A549 (cell line): ENCODE measurements at regions of chr10 and their contacts with region 1.

Region 1: DNA sequence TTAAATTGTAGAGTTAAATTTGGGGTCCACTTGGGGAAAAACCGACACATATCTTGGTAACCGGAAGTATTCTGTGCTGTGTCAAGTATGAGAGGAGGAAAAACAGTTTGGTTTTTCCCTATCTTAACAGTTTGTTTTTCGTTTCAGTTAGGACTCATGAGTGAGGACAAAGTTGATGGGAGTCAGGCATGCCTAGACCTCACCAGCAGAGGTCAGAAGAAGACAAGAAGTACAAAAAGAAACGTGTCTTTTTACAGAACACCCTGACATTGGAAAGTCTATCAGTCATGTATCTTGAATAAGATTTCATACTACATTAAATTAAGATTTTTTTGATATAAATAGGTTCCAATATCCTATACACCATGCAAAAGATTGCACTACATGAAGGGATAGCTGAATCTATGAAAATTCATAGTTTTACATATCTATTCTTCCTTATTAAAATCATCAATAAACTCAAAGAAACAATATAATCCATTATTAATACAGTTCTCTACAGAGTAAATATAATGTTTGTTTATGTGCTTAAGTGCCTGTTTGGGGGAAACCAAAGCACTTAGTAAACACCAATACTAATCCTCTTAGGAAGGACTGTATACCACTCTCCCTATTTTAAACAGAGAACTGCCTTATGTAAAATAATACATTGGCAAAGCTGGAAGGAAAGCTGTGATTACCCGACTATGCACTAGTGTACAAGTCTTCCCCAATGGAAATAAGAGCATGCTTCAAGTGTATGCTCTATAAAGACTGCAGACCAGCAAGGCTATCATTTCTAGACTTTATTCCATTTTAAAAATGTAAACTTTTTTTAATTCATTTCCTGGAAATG is 95.6 kb downstream of the USP6NL start:
- DNase-seq: peak; percentile 28 to 69
- ATAC-seq: peak; percentile 88 to 91
- H3K4me3 ChIP-seq: no peak overlapping the region
- H3K27ac ChIP-seq: no peak overlapping the region
- H3K4me1 ChIP-seq: no peaks in the 10 kb centered on the region
- CTCF ChIP-seq: peak; percentile 90
- EP300 ChIP-seq: no peak
- POLR2A ChIP-seq: no peak
- RAD21 ChIP-seq: peak; percentile 95 to 97

Region 2: DNA sequence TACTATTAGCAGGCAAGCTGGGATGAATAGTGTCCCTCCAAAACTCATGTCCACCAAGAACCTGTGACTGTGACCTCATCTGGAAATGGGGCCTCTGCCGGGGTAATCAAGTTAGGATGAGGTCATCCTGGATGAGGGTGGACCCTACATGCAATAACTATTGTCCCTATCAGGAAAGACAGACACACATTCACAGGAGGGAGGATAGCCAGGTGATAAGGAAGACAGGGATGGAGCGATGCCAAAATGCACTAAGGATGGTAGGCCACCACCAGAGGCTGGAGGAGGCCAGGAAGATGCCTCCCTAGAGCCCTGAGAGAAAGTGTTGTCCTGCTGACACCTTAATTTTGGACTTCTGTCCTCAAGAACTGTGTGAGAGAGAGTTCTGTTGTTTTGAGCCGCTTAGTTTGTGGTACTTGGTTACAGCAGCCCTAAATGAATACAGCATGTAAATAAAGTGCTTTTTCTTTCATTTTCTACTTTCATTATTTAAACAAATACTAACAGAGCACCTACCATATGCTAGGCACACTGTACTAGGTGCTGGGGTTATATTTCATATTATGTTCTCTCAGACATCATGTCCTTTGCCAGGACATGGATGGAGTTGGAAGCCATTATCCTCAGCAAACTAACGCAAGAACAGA is 16.3 kb before region 1 on chr10:
- CTCF ChIA-PET with region 1: interaction called, 19 read pairs
- POLR2A ChIA-PET with region 1: no interaction called
- DNase-seq: no peak
- ATAC-seq: no peak
- H3K4me3 ChIP-seq: no peak overlapping the region
- H3K27ac ChIP-seq: no peak overlapping the region
- H3K4me1 ChIP-seq: no peaks in the 10 kb centered on the region
- CTCF ChIP-seq: no peak
- EP300 ChIP-seq: no peak
- POLR2A ChIP-seq: no peak
- RAD21 ChIP-seq: no peak

Region 3: DNA sequence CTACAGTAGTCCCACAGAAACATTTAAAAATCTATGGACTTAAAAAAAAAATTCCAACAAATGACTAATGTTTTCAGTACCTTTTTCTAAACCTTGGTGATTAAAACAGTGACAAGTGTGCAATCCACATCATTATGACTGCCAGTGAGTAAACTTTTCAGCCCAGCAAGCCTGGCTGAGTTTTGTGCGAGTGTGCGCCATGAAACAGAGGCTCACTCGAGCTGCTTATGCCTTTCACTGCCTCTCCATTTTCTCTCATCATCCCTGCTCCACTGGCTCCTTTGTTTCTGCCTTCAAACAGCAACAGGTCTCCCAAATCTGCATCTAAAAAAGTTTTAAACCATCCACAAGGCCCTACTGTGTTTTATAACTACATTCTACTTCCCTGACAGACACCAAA is 10.2 kb before region 1 on chr10:
- CTCF ChIA-PET with region 1: interaction called, 19 read pairs
- POLR2A ChIA-PET with region 1: no interaction called
- DNase-seq: no peak
- ATAC-seq: no peak
- H3K4me3 ChIP-seq: no peak overlapping the region
- H3K27ac ChIP-seq: no peak overlapping the region
- H3K4me1 ChIP-seq: no peaks in the 10 kb centered on the region
- CTCF ChIP-seq: no peak
- EP300 ChIP-seq: no peak
- POLR2A ChIP-seq: no peak
- RAD21 ChIP-seq: no peak

Region 4: GRCh38 chr10:11715815-11716494 is 200.1 kb after region 1 on chr10:
- CTCF ChIA-PET with region 1: interaction called, 128 read pairs
- POLR2A ChIA-PET with region 1: no interaction called
- DNase-seq: no peak
- ATAC-seq: peak; percentile 49 to 65; a peak in 3 of 6 replicates
- H3K4me3 ChIP-seq: no peak overlapping the region
- H3K27ac ChIP-seq: no peak overlapping the region
- H3K4me1 ChIP-seq: peaks cover 9% of the 10 kb centered on the region; the same call in 1 of the 3 replicates
- CTCF ChIP-seq: no peak
- EP300 ChIP-seq: no peak
- POLR2A ChIP-seq: no peak
- RAD21 ChIP-seq: no peak

Region 5: DNA sequence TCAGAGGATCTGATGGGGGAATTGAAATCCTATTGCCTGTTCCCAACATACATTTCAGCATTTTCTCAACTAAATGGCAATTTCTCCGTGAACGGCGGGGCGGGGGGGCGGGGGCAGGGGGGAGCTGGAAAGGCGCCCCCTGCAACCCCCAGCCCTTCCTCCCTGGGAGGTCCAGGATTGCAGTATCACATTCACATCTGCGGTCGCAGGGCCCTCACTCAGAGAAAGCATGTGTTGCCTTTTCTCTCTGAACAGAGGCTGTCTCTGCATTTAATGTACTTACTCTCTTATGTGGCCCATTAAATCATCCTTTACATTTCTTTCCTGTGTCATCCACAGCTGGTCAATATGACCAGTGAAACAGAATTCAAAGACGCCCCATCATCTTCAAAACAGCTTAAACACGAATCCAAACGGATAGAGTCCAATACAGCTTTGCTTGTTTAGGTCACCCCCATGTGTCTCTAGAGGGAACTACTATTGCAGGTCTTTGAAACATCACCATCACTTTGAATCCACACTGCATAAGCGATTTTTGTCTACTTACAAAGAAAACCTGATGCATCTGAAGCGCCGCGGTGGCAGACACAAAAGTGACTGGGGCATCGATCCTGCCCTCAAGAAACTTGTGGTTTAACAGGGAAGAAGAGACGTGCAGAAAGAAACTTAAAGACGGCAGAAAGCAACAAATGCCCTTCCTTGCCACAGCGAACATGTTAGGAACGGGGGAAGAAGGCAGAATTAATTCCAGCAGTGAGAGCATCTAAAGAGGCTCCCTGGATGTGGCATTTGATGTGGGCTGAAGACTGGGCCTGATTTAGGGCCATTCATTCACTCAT is 209.3 kb after region 1 on chr10:
- CTCF ChIA-PET with region 1: interaction called, 128 read pairs
- POLR2A ChIA-PET with region 1: no interaction called
- DNase-seq: peak; percentile 71 to 72
- ATAC-seq: peak; percentile 95 to 97
- H3K4me3 ChIP-seq: no peak overlapping the region
- H3K27ac ChIP-seq: no peak overlapping the region
- H3K4me1 ChIP-seq: no peaks in the 10 kb centered on the region
- CTCF ChIP-seq: peak; percentile 67
- EP300 ChIP-seq: no peak
- POLR2A ChIP-seq: no peak
- RAD21 ChIP-seq: peak; percentile 85 to 93

Region 6: GRCh38 chr10:11748866-11749265 is 233.1 kb after region 1 on chr10:
- CTCF ChIA-PET with region 1: interaction called, 14 read pairs
- POLR2A ChIA-PET with region 1: no interaction called
- DNase-seq: no peak
- ATAC-seq: no peak
- H3K4me3 ChIP-seq: no peak overlapping the region
- H3K27ac ChIP-seq: no peak overlapping the region
- H3K4me1 ChIP-seq: no peaks in the 10 kb centered on the region
- CTCF ChIP-seq: no peak
- EP300 ChIP-seq: no peak
- POLR2A ChIP-seq: no peak
- RAD21 ChIP-seq: no peak